Natural killer cell (primary cell): ENCODE measurements at regions of chr9 and their contacts with region 1.

Region 1: GRCh38 chr9:136849038-136849959 is at the start of gene PHPT1:
- DNase-seq: peak; percentile 97 to 98
- ATAC-seq: peak; percentile 88 to 95 (median 89)
- H3K4me3 ChIP-seq: peak within 1 kb of the TSS; percentile 94
- H3K4me3 Mint-ChIP-seq: peak within 1 kb of the TSS; percentile 93
- H3K27ac ChIP-seq: peak within 1 kb of the TSS; percentile 77
- H3K27ac Mint-ChIP-seq: peak within 1 kb of the TSS; percentile 88 to 97
- H3K4me1 ChIP-seq: peaks cover 39% of the 10 kb centered on the region
- H3K4me1 Mint-ChIP-seq: peaks cover 8 to 27% of the 10 kb centered on the region in 2 donors
- H3K27me3 ChIP-seq: peaks cover 3% of the 10 kb centered on the region
- H3K27me3 Mint-ChIP-seq: no peaks in the 10 kb centered on the region
- CTCF ChIP-seq: no peak
- total RNA-seq, gene PHPT1: 63.5 to 69.8 (median 67.7) TPM

Region 2: DNA sequence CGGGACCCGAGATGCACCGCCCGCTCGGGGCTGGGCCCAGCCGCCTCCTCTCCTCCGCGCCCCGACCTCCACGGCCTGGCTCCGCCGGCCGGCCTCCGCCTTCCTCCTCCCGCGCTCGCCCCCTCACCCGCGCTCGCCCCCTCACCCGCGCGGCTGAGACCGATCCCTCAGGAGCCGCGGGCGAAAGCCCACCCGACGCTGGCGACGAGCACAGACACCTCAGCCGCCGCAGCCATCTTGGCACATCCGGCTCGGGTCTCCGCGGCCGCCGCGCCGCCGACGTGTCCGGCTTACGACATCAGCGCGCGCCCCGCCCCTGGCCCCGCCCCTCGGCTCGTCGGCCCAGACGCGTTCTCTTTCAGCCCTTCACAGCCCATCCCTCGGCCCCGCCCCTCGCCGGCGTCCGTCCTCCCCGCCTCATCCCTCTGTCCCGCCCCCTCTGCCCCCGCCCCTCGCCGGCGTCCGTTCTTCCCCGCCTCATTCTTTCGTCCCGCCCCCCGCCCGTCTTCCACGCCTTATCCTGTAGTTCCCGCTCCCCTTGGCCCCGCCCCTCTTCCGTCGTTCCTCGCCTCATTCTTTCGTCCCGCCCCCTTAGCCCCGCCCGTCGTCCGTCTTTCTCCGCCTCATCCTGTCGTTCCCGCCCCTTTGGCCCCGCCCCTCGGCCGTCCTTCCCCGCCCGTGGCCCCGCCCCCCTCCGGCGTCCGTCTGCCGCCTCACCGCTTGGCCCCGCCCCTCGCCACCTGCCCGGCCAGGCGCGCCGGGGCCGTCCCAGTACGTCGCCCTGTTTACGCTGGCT is 366.3 kb before region 1 on chr9 and contains the start of gene SEC16A:
- intact Hi-C with region 1: loop called (anchors 2 kb)
- DNase-seq: peak; percentile 99
- ATAC-seq: peak; percentile 67 to 87 (median 71)
- H3K4me3 ChIP-seq: peak within 1 kb of the TSS; percentile 67
- H3K4me3 Mint-ChIP-seq: peak within 1 kb of the TSS; percentile 98
- H3K27ac ChIP-seq: peak within 1 kb of the TSS; percentile 100
- H3K27ac Mint-ChIP-seq: peak within 1 kb of the TSS; percentile 95 to 100
- H3K4me1 ChIP-seq: peaks cover 33% of the 10 kb centered on the region
- H3K4me1 Mint-ChIP-seq: peaks cover 22 to 36% of the 10 kb centered on the region in 2 donors
- H3K27me3 ChIP-seq: no peaks in the 10 kb centered on the region
- H3K27me3 Mint-ChIP-seq: peaks cover 0 to 2% of the 10 kb centered on the region in 2 donors
- CTCF ChIP-seq: no peak
- total RNA-seq, gene SEC16A: 84.3 to 89.0 (median 87.1) TPM

Region 3: DNA sequence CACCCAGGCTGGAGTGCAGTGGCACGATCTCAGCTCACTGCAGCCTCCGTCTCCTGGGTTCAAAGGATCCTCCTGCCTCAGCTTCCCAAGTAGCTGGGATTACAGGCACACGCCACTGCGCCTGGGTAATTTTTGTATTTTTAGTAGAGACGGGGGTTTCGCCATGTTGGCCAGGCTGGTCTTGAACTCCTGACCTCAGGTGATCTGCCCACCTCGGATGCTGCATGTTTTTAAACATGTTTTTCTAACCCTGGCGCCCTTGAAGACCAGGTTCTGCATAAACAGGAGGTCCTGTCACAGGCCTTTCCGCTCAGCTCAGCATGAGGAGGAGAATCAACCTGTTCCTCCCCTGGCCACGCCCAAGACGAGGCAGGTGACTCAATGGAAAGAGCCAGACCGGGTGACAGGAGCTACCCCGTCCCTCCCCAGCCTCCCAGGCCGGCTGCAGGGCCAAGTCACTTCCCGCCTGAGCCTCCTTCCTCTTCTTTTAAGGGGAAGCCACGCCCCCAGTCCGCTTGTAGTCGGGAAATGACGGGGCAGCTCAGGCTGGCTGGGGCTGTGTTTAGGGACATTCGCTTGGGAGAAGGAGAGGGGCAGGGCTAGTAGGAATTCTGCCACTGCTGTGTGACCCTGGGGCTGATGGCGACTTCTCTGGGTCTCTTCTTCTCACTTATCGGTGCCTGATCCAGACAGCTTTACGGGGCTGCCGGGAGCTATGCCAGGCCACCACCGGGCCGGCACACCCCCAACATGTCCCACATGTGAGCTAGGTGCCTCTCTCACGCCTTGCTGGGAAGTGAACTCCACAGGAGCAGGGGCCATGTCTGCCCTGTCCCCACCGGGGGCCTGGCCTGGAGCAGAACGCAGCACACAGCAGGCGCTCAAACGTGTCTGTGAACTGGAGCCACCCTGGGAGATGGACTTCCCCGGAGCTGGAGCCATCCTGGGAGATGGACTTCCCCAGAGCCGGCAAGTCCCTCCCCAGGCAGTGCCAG is 309.6 kb before region 1 on chr9:
- intact Hi-C with region 1: loop called (anchors 10 kb)
- DNase-seq: peak; percentile 64 to 89
- ATAC-seq: peak; percentile 30 to 69 (median 50)
- H3K4me3 ChIP-seq: peak overlapping the region; percentile 9
- H3K4me3 Mint-ChIP-seq: peak overlapping the region; percentile 98
- H3K27ac ChIP-seq: peak overlapping the region; percentile 87
- H3K27ac Mint-ChIP-seq: peak overlapping the region; percentile 89 to 99
- H3K4me1 ChIP-seq: peaks cover 97% of the 10 kb centered on the region
- H3K4me1 Mint-ChIP-seq: peaks cover 49 to 53% of the 10 kb centered on the region in 2 donors
- H3K27me3 ChIP-seq: no peaks in the 10 kb centered on the region
- H3K27me3 Mint-ChIP-seq: no peaks in the 10 kb centered on the region
- CTCF ChIP-seq: no peak

Region 4: DNA sequence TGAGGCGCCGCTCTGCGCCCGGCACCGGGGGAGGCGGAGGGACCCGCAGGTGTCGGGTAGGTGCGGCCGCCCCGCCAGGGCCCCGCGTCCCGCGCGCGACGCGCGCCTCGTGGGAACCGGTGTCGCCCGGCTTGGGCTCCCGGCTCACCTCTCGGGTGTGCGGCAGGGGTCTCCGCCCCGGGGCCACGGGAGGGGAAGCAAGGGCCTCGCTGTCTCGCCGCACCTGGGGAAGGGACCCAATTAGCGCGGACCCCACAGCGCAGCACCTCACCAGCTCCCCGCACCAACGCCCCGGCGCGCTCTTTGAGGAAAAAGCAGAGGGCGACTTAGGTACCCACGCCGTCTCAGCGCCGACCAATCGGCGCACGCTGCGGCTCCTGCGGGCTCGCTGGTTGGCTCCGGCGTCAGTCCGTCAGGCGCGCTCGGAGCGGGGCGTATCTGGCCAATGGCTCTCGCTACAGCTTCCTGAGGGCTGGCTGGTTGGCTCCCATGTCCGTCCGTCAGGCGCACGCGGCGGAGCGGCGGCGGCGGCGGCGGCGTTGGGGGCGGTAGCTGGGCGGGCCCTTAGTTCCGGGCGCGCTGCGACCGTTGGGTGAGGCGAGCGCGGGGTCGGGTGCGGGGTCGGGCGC is 36.8 kb after region 1 on chr9 and contains the start of gene TRAF2:
- intact Hi-C with region 1: loop called (anchors 1 kb)
- DNase-seq: peak; percentile 97 to 99
- ATAC-seq: peak; percentile 81 to 95 (median 88)
- H3K4me3 ChIP-seq: peak within 1 kb of the TSS; percentile 71
- H3K4me3 Mint-ChIP-seq: peak within 1 kb of the TSS; percentile 85
- H3K27ac ChIP-seq: peak within 1 kb of the TSS; percentile 87
- H3K27ac Mint-ChIP-seq: peak within 1 kb of the TSS; percentile 93 to 98
- H3K4me1 ChIP-seq: peaks cover 59% of the 10 kb centered on the region
- H3K4me1 Mint-ChIP-seq: peaks cover 15 to 34% of the 10 kb centered on the region in 2 donors
- H3K27me3 ChIP-seq: no peaks in the 10 kb centered on the region
- H3K27me3 Mint-ChIP-seq: no peaks in the 10 kb centered on the region
- CTCF ChIP-seq: no peak
- total RNA-seq, gene TRAF2: 17.4 to 35.5 (median 25.0) TPM

Region 5: GRCh38 chr9:137000177-137000883 is 151.0 kb after region 1 on chr9:
- intact Hi-C with region 1: loop called (anchors 5 kb)
- DNase-seq: peak; percentile 56 to 70
- ATAC-seq: peak; percentile 35 to 63 (median 44)
- H3K4me3 ChIP-seq: no peak overlapping the region
- H3K4me3 Mint-ChIP-seq: peak overlapping the region; percentile 84
- H3K27ac ChIP-seq: peak overlapping the region; percentile 77
- H3K27ac Mint-ChIP-seq: peak overlapping the region; percentile 97 to 99
- H3K4me1 ChIP-seq: peaks cover 77% of the 10 kb centered on the region
- H3K4me1 Mint-ChIP-seq: peaks cover 32 to 54% of the 10 kb centered on the region in 2 donors
- H3K27me3 ChIP-seq: no peaks in the 10 kb centered on the region
- H3K27me3 Mint-ChIP-seq: no peaks in the 10 kb centered on the region
- CTCF ChIP-seq: no peak